Heart left ventricle (tissue), 16 donors: ENCODE measurements at regions of chr18 and their contacts with region 1.

Region 1: DNA sequence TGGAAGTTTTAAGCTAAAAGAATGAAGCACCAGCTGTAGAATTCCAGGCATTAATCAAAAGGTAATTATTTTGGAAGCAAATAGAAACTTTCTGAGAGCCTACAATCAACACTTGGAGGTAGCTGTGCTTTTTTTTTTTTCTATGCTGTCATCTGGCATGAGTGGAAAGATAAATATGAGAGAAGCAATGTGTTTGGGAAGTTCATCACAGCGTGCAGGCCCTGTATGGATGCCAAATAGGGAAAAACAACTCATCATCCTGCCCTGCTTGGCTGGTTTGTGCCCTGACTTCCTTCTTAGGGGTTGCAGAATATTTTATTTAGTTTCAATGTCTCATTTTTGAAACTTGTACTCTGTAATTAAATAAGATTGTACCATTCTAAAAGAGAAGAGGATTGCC is 437.4 kb downstream of the PIK3C3 start:
- DNase-seq: no peak
- ATAC-seq: no peak
- H3K4me3 ChIP-seq: no peak overlapping the region
- H3K27ac ChIP-seq: no peak overlapping the region
- H3K4me1 ChIP-seq: no peaks in the 10 kb centered on the region
- H3K27me3 ChIP-seq: no peaks in the 10 kb centered on the region
- CTCF ChIP-seq: no peak
- POLR2A ChIP-seq: no peak

Region 2: DNA sequence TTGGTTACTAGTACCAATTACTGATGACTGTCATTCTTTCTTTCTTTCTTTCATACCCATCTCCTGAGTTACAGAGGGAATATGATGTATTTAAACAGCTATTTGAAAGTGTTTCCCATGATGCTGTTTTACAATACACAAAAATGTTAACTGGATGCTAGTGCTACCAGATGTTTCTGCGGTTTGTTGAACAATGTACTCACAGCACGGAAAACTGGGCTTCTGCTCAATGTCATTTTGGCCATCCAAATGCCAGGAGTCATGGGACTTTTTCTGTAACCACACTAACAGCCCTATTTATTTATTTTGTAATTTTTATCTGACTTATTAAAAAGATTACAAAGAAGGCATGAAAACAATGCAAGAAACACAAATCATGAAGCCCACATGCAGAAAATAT is 409.3 kb after region 1 on chr18:
- intact Hi-C with region 1: loop called in 1 of 10 experiments (anchors 5 kb)
- DNase-seq: no peak
- ATAC-seq: no peak
- H3K4me3 ChIP-seq: no peak overlapping the region
- H3K27ac ChIP-seq: no peak overlapping the region
- H3K4me1 ChIP-seq: no peaks in the 10 kb centered on the region
- H3K27me3 ChIP-seq: no peaks in the 10 kb centered on the region
- CTCF ChIP-seq: no peak
- POLR2A ChIP-seq: no peak